ENCODE measurements at regions of chr1 and their contacts with region 1.

Region 1: GRCh38 chr1:242467556-242468145 is 56.8 kb downstream of the PLD5 start:
- DNase-seq: peak; percentile 60 to 69
- H3K4me3 ChIP-seq: no peak overlapping the region
- H3K27ac ChIP-seq: peak overlapping the region; percentile 37 to 44
- H3K4me1 ChIP-seq: peaks cover 0 to 18% (median 5%) of the 10 kb centered on the region in 4 donors
- H3K27me3 ChIP-seq: no peaks in the 10 kb centered on the region
- CTCF ChIP-seq: peak; percentile 71 to 77

Region 2: DNA sequence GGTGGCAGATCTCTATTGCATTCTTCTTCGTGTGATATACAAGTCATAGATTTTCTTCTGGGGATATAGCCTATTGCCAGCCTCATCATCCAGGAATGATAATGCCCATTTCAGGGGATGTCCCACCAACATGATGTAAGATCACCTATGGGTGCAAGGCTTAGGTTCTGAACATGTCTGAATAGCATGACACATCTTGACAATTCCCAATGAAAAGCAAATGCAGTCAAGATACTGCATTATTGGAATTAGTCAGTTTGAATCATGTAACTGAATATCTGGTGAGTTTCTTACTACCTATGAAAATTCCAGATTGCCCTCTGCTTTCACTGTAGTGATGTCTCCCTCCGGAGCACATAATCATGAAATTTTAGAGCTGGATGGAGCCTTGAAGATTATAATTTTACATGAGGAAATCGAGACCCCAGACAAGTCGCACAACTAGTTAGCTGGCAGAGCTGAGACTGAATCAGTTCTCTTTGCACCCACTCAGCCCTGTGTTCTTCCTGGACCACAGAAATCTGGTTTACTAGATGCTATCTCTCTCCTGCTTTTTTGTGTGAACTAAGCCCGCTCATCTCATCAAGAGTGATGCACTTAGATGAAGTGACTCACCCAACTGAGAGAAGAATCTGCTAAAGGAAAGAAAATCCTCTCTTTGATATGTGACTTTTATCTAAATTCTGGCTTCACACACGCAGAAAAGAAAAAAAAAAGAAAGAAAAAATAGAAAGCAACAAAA is 750.6 kb before region 1 on chr1:
- intact Hi-C with region 1: no loop called
- DNase-seq: no peak
- H3K4me3 ChIP-seq: no peak overlapping the region
- H3K27ac ChIP-seq: no peak overlapping the region
- H3K4me1 ChIP-seq: no peaks in the 10 kb centered on the region
- H3K27me3 ChIP-seq: peaks cover 0 to 3% of the 10 kb centered on the region in 2 donors
- CTCF ChIP-seq: no peak

Region 3: GRCh38 chr1:243325305-243325890 is 857.7 kb after region 1 on chr1:
- intact Hi-C with region 1: loop called (anchors 10 kb)
- DNase-seq: no peak
- H3K4me3 ChIP-seq: no peak overlapping the region
- H3K27ac ChIP-seq: no peak overlapping the region
- H3K4me1 ChIP-seq: no peaks in the 10 kb centered on the region
- H3K27me3 ChIP-seq: no peaks in the 10 kb centered on the region
- CTCF ChIP-seq: peak; percentile 71 to 76

Measured in tibial artery (tissue), 4 donors.